ENCODE measurements at regions of chr7 and their contacts with region 1.

Region 1: GRCh38 chr7:48154792-48155413 is 16.4 kb upstream of the ABCA13 start:
- DNase-seq: no peak
- H3K4me3 ChIP-seq: no peak overlapping the region
- CTCF ChIP-seq: peak; percentile 73

Region 2: GRCh38 chr7:47945261-47946001 is 209.5 kb before region 1 on chr7:
- CTCF ChIA-PET with region 1: interaction called, 240 read pairs
- POLR2A ChIA-PET with region 1: interaction called, 3 read pairs
- DNase-seq: no peak
- H3K4me3 ChIP-seq: no peak overlapping the region
- CTCF ChIP-seq: peak; percentile 49

Region 3: GRCh38 chr7:47991741-47992311 is 163.1 kb before region 1 on chr7:
- CTCF ChIA-PET with region 1: interaction called, 38 read pairs
- POLR2A ChIA-PET with region 1: no interaction called
- DNase-seq: no peak
- H3K4me3 ChIP-seq: peak overlapping the region; percentile 63
- CTCF ChIP-seq: peak; percentile 86

Region 4: DNA sequence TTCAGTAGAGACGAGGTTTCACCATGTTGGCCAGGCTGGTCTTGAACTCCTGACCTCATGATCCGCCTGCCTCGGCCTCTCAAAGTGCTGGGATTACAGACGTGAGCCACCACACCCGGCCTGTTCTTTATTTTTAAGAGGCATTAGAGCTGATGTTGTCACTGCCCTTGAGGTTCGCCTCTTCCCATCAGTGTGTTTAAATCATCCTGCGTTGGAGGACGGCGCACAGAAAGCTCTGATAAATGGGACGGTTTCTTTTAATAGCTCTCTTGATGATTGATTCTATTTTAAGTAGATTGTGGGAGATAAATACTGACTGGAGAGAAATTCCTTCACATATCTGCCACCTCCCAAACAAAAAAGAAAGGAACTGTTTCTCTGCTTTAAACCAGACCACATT is 36.9 kb before region 1 on chr7:
- CTCF ChIA-PET with region 1: interaction called, 17 read pairs
- POLR2A ChIA-PET with region 1: no interaction called
- DNase-seq: no peak
- H3K4me3 ChIP-seq: no peak overlapping the region
- CTCF ChIP-seq: no peak

Region 5: DNA sequence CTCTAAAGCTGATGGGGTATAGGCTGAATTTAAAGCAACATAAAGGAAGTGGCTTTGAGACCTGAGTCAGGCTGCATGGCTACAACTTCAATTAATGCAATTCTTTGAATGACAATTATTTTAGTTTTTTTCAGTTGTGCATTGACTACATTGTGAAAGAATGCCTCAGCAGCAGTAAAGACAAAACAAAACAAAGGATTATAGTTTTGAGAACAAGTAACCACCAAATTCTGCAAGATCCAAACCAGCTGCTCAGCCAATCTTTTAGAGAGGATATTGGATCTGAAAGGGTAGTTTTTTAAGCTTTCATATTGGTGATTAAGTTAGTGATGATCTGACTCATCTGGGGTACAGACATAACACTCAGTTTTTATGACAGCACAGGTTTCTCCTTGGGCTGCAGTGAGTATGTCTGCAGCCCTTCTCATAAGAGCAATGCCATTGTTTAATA is 24.2 kb before region 1 on chr7:
- CTCF ChIA-PET with region 1: interaction called, 22 read pairs
- POLR2A ChIA-PET with region 1: no interaction called
- DNase-seq: peak; percentile 28
- H3K4me3 ChIP-seq: no peak overlapping the region
- CTCF ChIP-seq: no peak

Region 6: DNA sequence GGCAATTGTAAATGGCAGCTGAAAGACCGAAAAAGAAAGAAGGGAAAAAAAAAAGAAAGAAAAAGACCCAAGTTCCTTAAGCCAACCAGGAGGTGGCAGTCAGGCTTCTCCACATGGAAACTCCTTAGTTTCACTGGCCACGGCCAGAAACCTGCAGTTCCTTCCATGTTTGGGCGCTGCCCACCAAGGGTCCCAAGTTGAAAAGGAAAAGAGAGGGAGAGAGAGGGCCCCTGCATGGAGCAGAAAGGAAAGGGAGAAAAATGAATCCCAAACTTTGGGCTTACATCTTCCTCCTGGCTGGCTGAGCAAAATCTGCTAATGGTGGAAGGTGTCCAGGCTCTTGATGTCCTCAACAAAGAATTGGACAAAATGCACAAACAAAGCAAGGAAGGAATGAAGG is 15.4 kb before region 1 on chr7:
- CTCF ChIA-PET with region 1: interaction called, 42 read pairs
- POLR2A ChIA-PET with region 1: no interaction called
- DNase-seq: no peak
- H3K4me3 ChIP-seq: no peak overlapping the region
- CTCF ChIP-seq: peak; percentile 28

Region 7: DNA sequence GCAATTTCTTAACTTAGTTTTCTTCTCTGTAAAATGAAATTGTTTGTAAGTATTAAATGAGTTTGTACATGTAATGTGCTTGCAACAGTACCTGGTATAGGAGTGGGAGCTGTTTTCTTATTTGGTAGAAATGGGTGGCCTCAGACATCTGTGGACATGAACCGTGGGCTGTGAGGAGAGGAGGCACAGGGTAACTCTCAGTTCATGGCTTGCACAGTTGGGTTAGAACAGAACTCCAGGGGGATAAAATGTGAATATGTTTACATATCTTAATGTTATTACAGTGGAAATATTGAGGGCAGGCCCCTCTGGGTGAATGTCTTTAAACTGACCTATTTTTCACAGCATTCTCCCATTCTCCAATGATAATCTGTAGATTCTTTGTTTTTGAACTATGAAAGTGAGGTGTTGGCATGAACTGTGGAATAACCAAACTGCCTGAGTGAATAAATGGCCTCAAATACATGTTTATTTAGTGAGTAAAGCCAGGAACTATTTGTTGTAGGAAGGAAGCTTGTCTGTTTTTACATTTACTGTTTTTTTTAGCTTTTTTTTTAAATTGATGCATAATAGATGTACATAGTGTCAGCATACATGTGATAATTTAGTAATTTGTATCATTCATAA is 19.0 kb after region 1 on chr7:
- CTCF ChIA-PET with region 1: interaction called, 10 read pairs
- POLR2A ChIA-PET with region 1: no interaction called
- DNase-seq: no peak
- H3K4me3 ChIP-seq: no peak overlapping the region
- CTCF ChIP-seq: no peak

Measured in AG04449 (cell line).